Panc1 (cell line): ENCODE measurements at regions of chr6 and their contacts with region 1.

Region 1: DNA sequence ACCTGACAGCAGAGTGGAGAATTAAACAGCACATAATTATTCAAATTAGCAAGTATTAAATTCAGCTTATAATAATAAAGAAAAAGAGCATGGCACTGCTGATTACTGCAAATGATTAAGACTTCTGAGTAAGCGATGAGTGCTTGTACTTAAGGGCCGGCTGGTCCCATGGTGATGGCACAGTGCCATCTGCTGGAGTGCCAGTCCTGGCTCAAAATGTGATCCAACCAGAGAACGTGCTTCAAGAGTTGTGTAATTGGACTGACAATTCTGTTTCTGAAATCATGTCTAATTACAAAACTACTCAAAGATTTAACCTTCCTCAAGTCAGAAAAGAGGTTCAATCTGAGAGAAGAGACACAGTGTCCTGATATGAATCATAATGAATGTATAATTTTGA is 181.6 kb upstream of the RGS17 start:
- DNase-seq: peak; percentile 52
- ATAC-seq: peak; percentile 89
- H3K4me3 ChIP-seq: no peak overlapping the region
- H3K27ac ChIP-seq: no peak overlapping the region
- H3K4me1 ChIP-seq: no peaks in the 10 kb centered on the region
- H3K27me3 ChIP-seq: no peaks in the 10 kb centered on the region
- CTCF ChIP-seq: peak; percentile 82

Region 2: GRCh38 chr6:153301602-153302001 is 11.0 kb before region 1 on chr6:
- CTCF ChIA-PET with region 1: interaction called, 15 read pairs
- POLR2A ChIA-PET with region 1: no interaction called
- in situ Hi-C with region 1: no loop called
- intact Hi-C with region 1: no loop called
- DNase-seq: no peak
- ATAC-seq: no peak
- H3K4me3 ChIP-seq: no peak overlapping the region
- H3K27ac ChIP-seq: no peak overlapping the region
- H3K4me1 ChIP-seq: no peaks in the 10 kb centered on the region
- H3K27me3 ChIP-seq: no peaks in the 10 kb centered on the region
- CTCF ChIP-seq: no peak

Region 3: DNA sequence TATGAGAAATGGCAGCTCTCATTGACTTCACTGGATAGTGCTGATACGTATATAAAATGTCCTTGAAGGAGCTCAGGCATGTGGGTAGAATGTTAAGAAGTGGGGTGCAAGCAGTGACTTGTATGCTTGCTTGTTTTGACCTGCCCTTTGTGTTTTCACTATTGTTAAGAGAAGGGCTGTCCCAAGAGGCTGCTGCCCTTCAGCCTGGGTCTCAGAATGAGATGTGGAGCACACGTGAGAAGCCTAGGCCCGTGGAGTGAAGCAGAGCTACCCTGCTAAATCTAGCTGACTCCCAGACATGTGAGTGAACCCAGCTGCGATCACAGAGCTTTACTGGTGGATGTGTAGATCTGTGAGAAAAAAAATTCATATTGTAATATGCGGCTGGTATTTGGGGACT is 123.7 kb after region 1 on chr6:
- CTCF ChIA-PET with region 1: no interaction called
- POLR2A ChIA-PET with region 1: no interaction called
- in situ Hi-C with region 1: no loop called
- intact Hi-C with region 1: no loop called
- DNase-seq: no peak
- ATAC-seq: no peak
- H3K4me3 ChIP-seq: no peak overlapping the region
- H3K27ac ChIP-seq: no peak overlapping the region
- H3K4me1 ChIP-seq: no peaks in the 10 kb centered on the region
- H3K27me3 ChIP-seq: no peaks in the 10 kb centered on the region
- CTCF ChIP-seq: no peak

Region 4: GRCh38 chr6:153702671-153703070 is 390.0 kb after region 1 on chr6:
- CTCF ChIA-PET with region 1: no interaction called
- POLR2A ChIA-PET with region 1: no interaction called
- in situ Hi-C with region 1: no loop called
- intact Hi-C with region 1: no loop called
- DNase-seq: no peak
- ATAC-seq: no peak
- H3K4me3 ChIP-seq: no peak overlapping the region
- H3K27ac ChIP-seq: no peak overlapping the region
- H3K4me1 ChIP-seq: no peaks in the 10 kb centered on the region
- H3K27me3 ChIP-seq: no peaks in the 10 kb centered on the region
- CTCF ChIP-seq: no peak

Region 5: GRCh38 chr6:154754152-154754551 is 1441.5 kb after region 1 on chr6:
- CTCF ChIA-PET with region 1: no interaction called
- POLR2A ChIA-PET with region 1: no interaction called
- in situ Hi-C with region 1: no loop called
- intact Hi-C with region 1: no loop called
- DNase-seq: no peak
- ATAC-seq: no peak
- H3K4me3 ChIP-seq: no peak overlapping the region
- H3K27ac ChIP-seq: no peak overlapping the region
- H3K4me1 ChIP-seq: peaks cover 16% of the 10 kb centered on the region
- H3K27me3 ChIP-seq: no peaks in the 10 kb centered on the region
- CTCF ChIP-seq: no peak